CD4-positive, alpha-beta memory T cell (primary cell): ENCODE measurements at regions of chr13 and their contacts with region 1.

Region 1: DNA sequence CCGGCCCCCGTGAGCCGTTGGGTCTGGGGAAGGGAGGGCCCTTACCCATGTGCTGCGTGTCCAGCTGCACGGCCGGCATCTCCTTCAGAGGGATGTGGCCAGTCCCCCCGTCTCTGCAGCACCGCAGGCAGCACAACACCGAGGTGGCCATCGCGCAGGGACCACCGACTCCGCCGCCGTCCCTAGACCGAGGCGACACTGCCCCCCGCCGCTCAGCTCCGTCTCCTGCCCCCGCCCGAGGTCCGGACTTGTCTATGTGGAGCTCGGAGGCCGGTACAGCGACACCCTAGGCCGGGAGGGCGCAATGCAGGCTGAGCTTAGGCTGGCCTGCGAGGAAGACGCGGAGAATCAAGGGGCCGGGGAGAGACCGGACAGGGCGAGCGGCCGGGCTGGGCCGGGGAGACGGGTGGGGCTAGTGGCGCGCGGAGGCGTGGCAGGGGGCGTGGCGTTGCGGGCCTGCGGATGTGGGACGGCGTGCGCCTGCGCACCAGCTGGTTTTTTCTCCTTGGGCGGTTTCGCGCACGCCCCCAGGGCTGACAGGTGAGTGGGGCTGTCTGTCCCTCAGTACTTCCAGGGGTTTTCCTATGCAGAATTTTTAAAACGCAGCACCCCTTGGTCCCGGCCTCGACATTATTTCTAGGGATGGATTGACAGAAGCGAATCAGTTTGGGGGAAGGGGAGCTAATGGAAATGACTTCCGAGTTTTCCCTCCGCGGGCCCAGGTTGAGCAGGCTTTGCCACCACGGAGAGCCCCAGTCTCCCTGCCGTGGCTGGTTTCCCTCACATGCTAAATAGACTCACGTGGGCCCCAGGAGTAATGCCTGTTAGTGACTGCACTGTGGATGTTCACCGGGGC is at the start of gene SPRYD7:
- DNase-seq: peak; percentile 89 to 92 (median 92)
- H3K4me3 ChIP-seq: peak within 1 kb of the TSS; percentile 66 to 96
- H3K4me3 Mint-ChIP-seq: peak within 1 kb of the TSS; percentile 91 to 97 (median 95)
- H3K27ac ChIP-seq: peak within 1 kb of the TSS; percentile 63
- H3K27ac Mint-ChIP-seq: peak within 1 kb of the TSS; percentile 85 to 97 (median 94)
- H3K4me1 ChIP-seq: peaks cover 19% of the 10 kb centered on the region
- H3K4me1 Mint-ChIP-seq: peaks cover 12 to 23% (median 15%) of the 10 kb centered on the region in 4 donors
- H3K27me3 ChIP-seq: no peaks in the 10 kb centered on the region
- H3K27me3 Mint-ChIP-seq: no peaks in the 10 kb centered on the region
- total RNA-seq, gene SPRYD7: 3.3 to 5.1 TPM

Region 2: GRCh38 chr13:50893211-50893852 is 957.0 kb after region 1 on chr13:
- CTCF ChIA-PET with region 1: no interaction called
- POLR2A ChIA-PET with region 1: interaction called, 10 read pairs
- intact Hi-C with region 1: no loop called
- DNase-seq: peak; percentile 43 to 71 (median 59)
- H3K4me3 ChIP-seq: peak overlapping the region; percentile 42 to 50
- H3K4me3 Mint-ChIP-seq: peak overlapping the region; percentile 69 to 85 (median 82)
- H3K27ac ChIP-seq: peak overlapping the region; percentile 69
- H3K27ac Mint-ChIP-seq: peak overlapping the region; percentile 78 to 97 (median 95)
- H3K4me1 ChIP-seq: peaks cover 45% of the 10 kb centered on the region
- H3K4me1 Mint-ChIP-seq: peaks cover 35 to 46% (median 39%) of the 10 kb centered on the region in 4 donors
- H3K27me3 ChIP-seq: no peaks in the 10 kb centered on the region
- H3K27me3 Mint-ChIP-seq: peaks cover 0 to 2% of the 10 kb centered on the region in 2 donors

Region 3: GRCh38 chr13:51825165-51825592 is 1888.9 kb after region 1 on chr13:
- CTCF ChIA-PET with region 1: no interaction called
- POLR2A ChIA-PET with region 1: interaction called, 3 read pairs
- intact Hi-C with region 1: loop called (anchors 10 kb)
- DNase-seq: peak; percentile 57 to 84 (median 79)
- H3K4me3 ChIP-seq: peak overlapping the region; percentile 31 to 56
- H3K4me3 Mint-ChIP-seq: peak overlapping the region; percentile 86 to 95 (median 90)
- H3K27ac ChIP-seq: peak overlapping the region; percentile 65
- H3K27ac Mint-ChIP-seq: peak overlapping the region; percentile 88 to 95 (median 94)
- H3K4me1 ChIP-seq: peaks cover 81% of the 10 kb centered on the region
- H3K4me1 Mint-ChIP-seq: peaks cover 56 to 99% (median 77%) of the 10 kb centered on the region in 4 donors
- H3K27me3 ChIP-seq: no peaks in the 10 kb centered on the region
- H3K27me3 Mint-ChIP-seq: no peaks in the 10 kb centered on the region